Left ventricle myocardium superior (tissue), 1 donor: ENCODE measurements at regions of chr13 and their contacts with region 1.

Region 1: DNA sequence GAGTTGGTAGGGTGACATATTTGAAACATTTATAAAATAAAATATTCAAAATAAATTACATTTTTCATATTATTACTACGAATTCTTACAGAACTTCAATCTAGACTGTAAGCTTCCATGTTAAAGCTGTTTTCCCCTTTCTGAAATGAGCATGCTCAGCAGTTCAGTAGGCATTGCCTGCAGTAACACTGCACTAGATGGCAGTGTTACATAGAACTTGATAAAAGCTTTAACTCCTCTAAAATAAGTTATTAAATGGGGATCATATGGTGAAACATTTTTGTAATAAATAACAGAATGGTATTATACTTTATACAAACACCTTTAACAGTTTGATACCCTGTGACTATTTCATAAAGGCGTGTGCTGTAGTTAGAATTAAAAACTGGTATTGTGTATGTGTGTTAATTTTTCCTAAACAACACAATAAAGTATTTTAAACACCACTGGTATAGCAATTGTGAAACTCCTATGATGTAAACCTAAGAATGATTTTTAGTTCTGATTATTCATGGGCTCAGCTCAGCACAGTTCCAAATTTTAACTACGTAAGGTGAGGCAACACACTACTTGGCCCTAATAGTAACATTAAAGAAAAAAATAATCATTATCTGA is 11.6 kb upstream of the GPR18 start:
- DNase-seq: no peak
- ATAC-seq: peak; percentile 68

Region 2: DNA sequence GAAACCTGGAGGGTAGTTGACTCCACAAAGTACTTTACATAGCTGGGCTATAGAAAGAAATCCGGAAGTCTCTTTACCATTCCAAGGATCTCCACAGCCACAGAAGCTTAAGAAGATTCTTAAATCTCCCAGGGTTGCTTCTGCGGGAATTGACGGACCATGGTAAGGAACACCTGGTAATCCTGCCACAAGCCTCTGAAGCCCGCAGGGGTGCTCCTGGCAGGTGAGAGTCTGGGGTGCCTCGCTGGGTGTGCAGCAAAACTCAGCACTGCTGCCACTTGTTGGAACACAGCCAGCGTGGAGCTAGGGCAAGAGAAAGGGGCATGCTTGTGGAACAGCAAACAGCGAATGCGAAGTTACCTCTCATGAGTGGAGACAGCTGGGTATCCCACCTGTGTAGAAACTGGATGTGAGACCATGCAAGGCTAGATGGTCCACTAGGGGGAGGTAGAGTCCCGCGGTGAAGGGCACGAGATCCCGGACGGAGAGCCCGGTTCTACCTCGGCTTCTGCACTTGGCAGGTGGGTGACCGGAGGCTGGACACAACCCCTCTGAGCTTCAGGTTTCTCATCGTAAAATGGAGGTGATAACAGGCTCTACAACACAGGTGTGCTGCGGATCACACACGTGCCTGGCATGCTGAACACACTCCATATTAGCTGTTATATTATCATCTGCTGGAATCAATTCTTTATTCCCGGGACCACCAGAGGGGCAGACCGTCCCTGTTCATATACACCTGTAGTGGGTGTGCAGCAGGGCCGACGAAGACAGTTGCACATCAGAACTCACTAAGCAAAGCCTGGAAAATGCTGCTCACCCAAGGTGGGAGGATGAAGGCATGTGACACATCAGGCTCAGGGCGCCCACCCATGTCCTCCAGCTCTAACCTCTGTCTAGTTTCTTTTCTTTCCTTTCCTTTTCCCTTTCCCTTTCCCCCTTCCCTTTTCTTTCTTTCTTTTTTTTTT is 93.1 kb before region 1 on chr13:
- intact Hi-C with region 1: loop called (anchors 2 kb)
- DNase-seq: peak; percentile 72
- ATAC-seq: peak; percentile 94

Region 3: DNA sequence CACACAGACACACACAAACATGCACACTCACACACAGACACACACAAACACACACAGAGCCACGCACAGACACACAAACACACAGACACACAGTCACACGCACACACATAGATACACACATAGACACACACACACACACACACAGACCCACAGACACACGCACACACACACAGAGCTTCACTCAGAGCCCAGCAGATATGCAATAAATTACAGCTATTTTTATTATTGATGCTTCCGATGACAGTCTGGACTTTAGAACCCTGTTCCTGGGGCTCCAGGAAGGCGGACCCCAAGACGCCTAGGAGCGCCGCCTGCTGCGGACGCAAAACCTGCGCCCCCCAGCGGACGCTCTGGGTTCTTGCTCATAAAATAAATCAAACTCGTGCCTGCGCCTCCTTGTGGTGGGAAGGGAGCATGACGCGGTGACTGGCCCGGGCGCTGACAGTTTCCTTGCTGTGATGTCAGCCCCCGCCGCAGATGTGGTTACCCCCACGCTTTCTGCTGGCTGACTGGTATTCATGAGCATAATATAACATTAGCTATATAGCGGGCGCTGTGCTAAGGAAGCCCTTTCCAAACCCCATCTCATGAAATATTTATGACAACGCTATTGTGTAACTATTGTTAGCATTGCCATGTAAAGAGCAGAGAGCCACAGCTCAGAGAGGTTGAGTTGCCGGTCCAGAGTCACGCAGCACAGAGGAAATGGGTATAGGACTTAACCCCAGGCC is 167.1 kb after region 1 on chr13:
- intact Hi-C with region 1: loop called (anchors 10 kb)
- DNase-seq: peak; percentile 91
- ATAC-seq: peak; percentile 55